ENCODE measurements at regions of chr3 and their contacts with region 1.

Region 1: GRCh38 chr3:141311496-141312353 is 56.6 kb upstream of the ZBTB38 start:
- DNase-seq: peak; percentile 100
- H3K4me3 Mint-ChIP-seq: peak overlapping the region; percentile 81
- H3K27ac Mint-ChIP-seq: peak overlapping the region; percentile 69
- H3K4me1 Mint-ChIP-seq: peaks cover 39% of the 10 kb centered on the region
- H3K27me3 Mint-ChIP-seq: peaks cover 21% of the 10 kb centered on the region
- CTCF ChIP-seq: peak; percentile 82

Region 2: DNA sequence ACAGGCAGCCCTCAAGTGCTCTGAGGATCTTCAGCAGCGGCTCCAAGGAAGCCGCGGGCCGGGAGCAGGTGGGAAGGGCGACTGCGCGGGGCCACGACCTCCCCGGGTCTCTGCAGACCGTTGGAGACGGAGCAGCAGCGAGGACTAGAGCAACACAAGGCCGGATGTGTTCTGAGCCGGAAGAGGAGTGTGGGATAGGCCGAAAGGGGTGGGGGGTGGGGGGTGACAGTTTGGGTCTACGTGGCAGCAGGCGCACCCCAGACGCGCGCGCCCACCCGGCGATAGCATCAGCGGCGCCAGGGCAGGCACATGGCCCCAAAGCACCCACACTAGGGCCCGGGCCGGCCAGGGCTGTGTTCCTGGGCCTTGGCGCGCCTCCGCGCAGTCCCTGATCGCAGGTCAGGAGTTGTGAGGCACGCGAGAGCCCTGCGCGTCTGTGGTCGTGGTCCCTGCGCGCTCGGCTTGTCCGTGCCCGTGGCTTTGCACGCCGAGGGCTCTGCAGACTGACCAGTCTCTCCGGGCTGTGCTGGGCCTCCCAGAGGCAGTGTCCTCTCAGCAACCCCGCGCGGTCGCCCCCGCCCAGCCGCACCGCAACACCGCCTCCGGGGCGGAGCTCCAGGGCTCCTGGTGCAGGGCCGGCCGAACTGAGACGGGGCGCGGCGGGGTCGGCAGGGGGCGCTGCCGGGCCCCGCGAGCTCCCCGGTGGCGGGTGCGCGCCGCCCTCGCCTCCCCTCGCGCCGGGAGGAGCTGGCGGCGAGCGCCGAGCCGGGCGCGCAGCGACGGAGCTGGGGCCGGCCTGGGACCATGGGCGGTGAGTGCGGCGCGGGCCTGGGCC is 80.4 kb before region 1 on chr3 and contains the start of gene PXYLP1:
- CTCF ChIA-PET with region 1: interaction called, 19 read pairs
- intact Hi-C with region 1: no loop called
- DNase-seq: peak; percentile 99
- H3K4me3 Mint-ChIP-seq: peak within 1 kb of the TSS; percentile 82
- H3K27ac Mint-ChIP-seq: peak within 1 kb of the TSS; percentile 32
- H3K4me1 Mint-ChIP-seq: peaks cover 36% of the 10 kb centered on the region
- H3K27me3 Mint-ChIP-seq: peaks cover 32% of the 10 kb centered on the region
- CTCF ChIP-seq: peak; percentile 76
- total RNA-seq, gene PXYLP1: 13.1 and 16.3 TPM in 2 replicates

Region 3: GRCh38 chr3:141346418-141346817 is 34.7 kb after region 1 on chr3:
- CTCF ChIA-PET with region 1: interaction called, 10 read pairs
- intact Hi-C with region 1: no loop called
- DNase-seq: peak; percentile 59
- H3K4me3 Mint-ChIP-seq: peak overlapping the region; percentile 9
- H3K27ac Mint-ChIP-seq: peak overlapping the region; percentile 10
- H3K4me1 Mint-ChIP-seq: peaks cover 18% of the 10 kb centered on the region
- H3K27me3 Mint-ChIP-seq: no peaks in the 10 kb centered on the region
- CTCF ChIP-seq: no peak

Region 4: GRCh38 chr3:141370065-141370533 is 58.4 kb after region 1 on chr3:
- CTCF ChIA-PET with region 1: interaction called, 19 read pairs
- intact Hi-C with region 1: no loop called
- DNase-seq: peak; percentile 79
- H3K4me3 Mint-ChIP-seq: peak overlapping the region; percentile 80
- H3K27ac Mint-ChIP-seq: peak overlapping the region; percentile 97
- H3K4me1 Mint-ChIP-seq: peaks cover 69% of the 10 kb centered on the region
- H3K27me3 Mint-ChIP-seq: no peaks in the 10 kb centered on the region
- CTCF ChIP-seq: peak; percentile 18

Region 5: GRCh38 chr3:141452036-141452435 is 140.3 kb after region 1 on chr3:
- CTCF ChIA-PET with region 1: interaction called, 54 read pairs
- intact Hi-C with region 1: loop called (anchors 1 kb)
- DNase-seq: peak; percentile 56
- H3K4me3 Mint-ChIP-seq: no peak overlapping the region
- H3K27ac Mint-ChIP-seq: no peak overlapping the region
- H3K4me1 Mint-ChIP-seq: peaks cover 29% of the 10 kb centered on the region
- H3K27me3 Mint-ChIP-seq: no peaks in the 10 kb centered on the region
- CTCF ChIP-seq: no peak

Measured in Calu3 (cell line).